ENCODE measurements at regions of chr2 and their contacts with region 1.

Region 1: GRCh38 chr2:65040400-65041261 is 15.6 kb upstream of the CEP68 start:
- DNase-seq: peak; percentile 67 to 74 (median 69)
- H3K4me3 ChIP-seq: no peak overlapping the region
- H3K4me3 Mint-ChIP-seq: peak overlapping the region in 2 of 8 donors; percentile 38 to 76
- H3K27ac ChIP-seq: no peak overlapping the region
- H3K27ac Mint-ChIP-seq: no peak overlapping the region
- H3K4me1 ChIP-seq: peaks cover 8% of the 10 kb centered on the region
- H3K4me1 Mint-ChIP-seq: peaks cover 4 to 11% (median 8%) of the 10 kb centered on the region in 4 donors
- H3K27me3 ChIP-seq: no peaks in the 10 kb centered on the region
- H3K27me3 Mint-ChIP-seq: no peaks in the 10 kb centered on the region

Region 2: DNA sequence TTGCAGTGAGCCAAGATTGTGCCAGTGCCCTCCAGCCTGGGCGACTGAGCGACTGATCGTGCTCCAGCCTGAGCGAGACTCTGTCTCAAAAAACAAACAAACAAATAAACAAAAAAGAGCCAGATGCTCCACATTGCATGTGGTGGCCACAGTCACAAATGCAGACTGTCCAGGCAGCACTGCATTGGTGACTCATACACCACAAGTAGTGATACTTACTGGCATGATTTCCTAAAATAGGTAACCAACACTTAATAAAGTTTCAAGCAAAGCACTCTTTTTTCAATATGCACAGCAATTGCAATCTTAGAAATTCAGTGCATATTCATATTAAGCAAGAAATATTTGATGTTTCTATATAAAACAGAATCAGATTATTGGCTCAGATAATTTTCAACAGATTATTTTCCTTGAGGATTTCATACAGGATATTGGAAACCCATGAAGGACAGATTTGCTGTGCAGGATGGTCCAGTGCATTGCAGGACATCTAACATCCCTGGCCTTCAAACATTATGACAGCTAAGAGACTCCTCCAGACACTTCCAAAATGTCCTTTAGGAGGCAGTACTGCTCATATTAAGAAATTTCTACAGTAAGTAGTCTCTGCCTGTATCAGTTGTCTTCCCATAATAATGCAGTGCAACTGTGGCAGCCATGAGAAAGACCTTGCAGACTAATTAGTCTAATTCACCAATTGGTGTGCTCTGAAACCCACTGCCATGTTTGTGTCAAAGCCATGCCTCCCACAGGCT is 61.9 kb before region 1 on chr2:
- CTCF ChIA-PET with region 1: interaction called, 11 read pairs
- POLR2A ChIA-PET with region 1: no interaction called
- intact Hi-C with region 1: loop called (anchors 1 kb)
- DNase-seq: peak in 4 of 5 donors; percentile 12 to 19 (median 17)
- H3K4me3 ChIP-seq: no peak overlapping the region
- H3K4me3 Mint-ChIP-seq: no peak overlapping the region
- H3K27ac ChIP-seq: no peak overlapping the region
- H3K27ac Mint-ChIP-seq: no peak overlapping the region
- H3K4me1 ChIP-seq: no peaks in the 10 kb centered on the region
- H3K4me1 Mint-ChIP-seq: no peaks in the 10 kb centered on the region
- H3K27me3 ChIP-seq: no peaks in the 10 kb centered on the region
- H3K27me3 Mint-ChIP-seq: no peaks in the 10 kb centered on the region

Region 3: DNA sequence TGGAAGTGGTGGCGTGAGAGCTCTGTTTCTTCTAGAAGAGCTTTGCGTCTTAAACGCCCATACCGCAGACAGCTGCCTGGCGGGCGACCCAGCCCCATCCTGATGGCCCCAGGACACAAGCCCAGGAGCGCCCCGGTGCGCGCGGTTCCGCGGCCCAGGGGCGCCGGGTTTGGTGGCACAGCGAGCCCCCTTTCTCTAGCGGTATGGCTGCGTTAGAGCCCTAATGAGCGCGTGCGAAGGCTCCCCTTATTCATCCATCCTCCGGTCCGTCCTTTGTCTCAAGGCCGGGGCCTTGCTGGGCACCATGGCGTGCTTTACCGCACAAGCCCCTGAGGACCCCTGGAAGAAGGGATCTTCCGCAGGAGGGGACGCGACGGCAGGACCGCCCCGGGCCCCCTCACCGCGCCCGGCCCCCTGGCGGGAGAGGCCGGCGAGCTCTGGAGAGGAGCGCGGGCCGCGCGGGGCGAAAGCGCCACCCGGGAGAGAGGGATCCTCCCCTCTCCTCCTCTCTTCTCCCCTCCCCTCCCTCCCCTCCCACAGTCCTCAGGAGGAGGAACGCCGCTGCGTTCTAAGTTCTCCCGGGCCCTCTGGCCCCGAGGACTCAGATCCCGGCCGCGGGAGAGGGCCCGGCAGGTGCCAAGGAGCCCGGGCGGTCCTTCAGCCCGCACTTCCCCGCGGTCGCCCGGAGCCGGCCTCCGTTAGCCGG is 52.1 kb before region 1 on chr2:
- CTCF ChIA-PET with region 1: interaction called, 3 read pairs
- POLR2A ChIA-PET with region 1: no interaction called
- intact Hi-C with region 1: loop called (anchors 1 kb)
- DNase-seq: peak in 4 of 5 donors; percentile 53 to 76 (median 60)
- H3K4me3 ChIP-seq: peak overlapping the region; percentile 52 to 56
- H3K4me3 Mint-ChIP-seq: peak overlapping the region; percentile 84 to 91 (median 89)
- H3K27ac ChIP-seq: peak overlapping the region; percentile 48
- H3K27ac Mint-ChIP-seq: peak overlapping the region; percentile 38 to 93 (median 71)
- H3K4me1 ChIP-seq: peaks cover 32% of the 10 kb centered on the region
- H3K4me1 Mint-ChIP-seq: peaks cover 16 to 44% (median 33%) of the 10 kb centered on the region in 4 donors
- H3K27me3 ChIP-seq: no peaks in the 10 kb centered on the region
- H3K27me3 Mint-ChIP-seq: no peaks in the 10 kb centered on the region

Region 4: GRCh38 chr2:65576861-65577601 is 536.4 kb after region 1 on chr2:
- CTCF ChIA-PET with region 1: no interaction called
- POLR2A ChIA-PET with region 1: no interaction called
- intact Hi-C with region 1: loop called (anchors 1 kb)
- DNase-seq: no peak
- H3K4me3 ChIP-seq: no peak overlapping the region
- H3K4me3 Mint-ChIP-seq: no peak overlapping the region
- H3K27ac ChIP-seq: no peak overlapping the region
- H3K27ac Mint-ChIP-seq: no peak overlapping the region
- H3K4me1 ChIP-seq: no peaks in the 10 kb centered on the region
- H3K4me1 Mint-ChIP-seq: peaks cover 0 to 4% (median under 1%) of the 10 kb centered on the region in 4 donors
- H3K27me3 ChIP-seq: no peaks in the 10 kb centered on the region
- H3K27me3 Mint-ChIP-seq: peaks cover 9 to 13% of the 10 kb centered on the region in 2 donors

Measured in CD4-positive, alpha-beta memory T cell (primary cell).